OCI-LY7 (cell line): ENCODE measurements at regions of chr16 and their contacts with region 1.

Region 1: GRCh38 chr16:28553776-28554633 is at the start of gene SGF29:
- DNase-seq: peak; percentile 95
- H3K4me3 ChIP-seq: peak within 1 kb of the TSS; percentile 72
- H3K27ac ChIP-seq: peak within 1 kb of the TSS; percentile 81
- H3K4me1 ChIP-seq: peaks cover 22% of the 10 kb centered on the region
- CTCF ChIP-seq: peak; percentile 63
- total RNA-seq, gene SGF29: 21.8 and 32.0 TPM in 2 replicates

Region 2: DNA sequence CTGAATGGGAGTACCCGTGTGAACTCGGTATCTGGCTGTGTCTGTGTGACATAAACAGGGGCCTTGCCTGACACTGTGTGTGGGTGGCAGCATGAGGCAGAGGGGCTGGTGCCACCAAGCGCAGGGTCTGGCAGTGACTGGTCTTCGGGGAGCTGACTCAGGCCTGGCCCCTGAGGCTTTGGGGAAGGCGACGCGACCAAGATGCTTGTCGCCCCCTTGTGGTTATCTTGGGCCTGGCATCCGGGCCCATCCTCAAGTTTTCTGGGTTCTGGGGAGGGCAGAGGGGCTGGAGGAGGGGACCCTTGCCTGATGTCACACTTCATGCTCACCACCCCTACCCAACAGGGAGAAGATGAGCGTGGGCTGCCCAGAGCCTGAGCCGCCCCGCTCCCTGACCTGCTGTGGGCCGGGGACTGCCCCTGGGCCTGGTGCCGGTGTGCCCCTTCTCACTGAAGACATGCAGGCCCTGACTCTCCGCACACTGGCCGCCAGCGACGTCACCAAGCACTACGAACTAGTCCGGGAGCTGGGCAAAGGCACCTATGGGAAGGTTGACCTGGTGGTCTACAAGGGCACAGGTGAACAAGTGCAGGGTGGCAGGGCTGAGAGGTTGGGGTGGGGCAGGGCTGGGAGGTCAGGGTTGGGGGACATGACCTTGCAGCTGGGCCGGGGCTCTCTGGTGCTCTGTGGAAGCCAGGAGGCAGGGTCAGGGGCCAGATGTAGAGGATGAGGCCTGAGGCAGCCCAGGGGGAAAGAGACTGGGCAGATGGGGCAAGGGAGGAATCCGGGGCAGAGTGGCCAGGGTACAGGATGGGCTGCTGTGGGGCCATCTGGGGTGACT is 236.7 kb before region 1 on chr16:
- CTCF ChIA-PET with region 1: no interaction called
- POLR2A ChIA-PET with region 1: interaction called, 3 read pairs
- intact Hi-C with region 1: loop called (anchors 5 kb)
- DNase-seq: peak; percentile 73
- H3K4me3 ChIP-seq: no peak overlapping the region
- H3K27ac ChIP-seq: no peak overlapping the region
- H3K4me1 ChIP-seq: no peaks in the 10 kb centered on the region
- CTCF ChIP-seq: peak; percentile 92

Region 3: DNA sequence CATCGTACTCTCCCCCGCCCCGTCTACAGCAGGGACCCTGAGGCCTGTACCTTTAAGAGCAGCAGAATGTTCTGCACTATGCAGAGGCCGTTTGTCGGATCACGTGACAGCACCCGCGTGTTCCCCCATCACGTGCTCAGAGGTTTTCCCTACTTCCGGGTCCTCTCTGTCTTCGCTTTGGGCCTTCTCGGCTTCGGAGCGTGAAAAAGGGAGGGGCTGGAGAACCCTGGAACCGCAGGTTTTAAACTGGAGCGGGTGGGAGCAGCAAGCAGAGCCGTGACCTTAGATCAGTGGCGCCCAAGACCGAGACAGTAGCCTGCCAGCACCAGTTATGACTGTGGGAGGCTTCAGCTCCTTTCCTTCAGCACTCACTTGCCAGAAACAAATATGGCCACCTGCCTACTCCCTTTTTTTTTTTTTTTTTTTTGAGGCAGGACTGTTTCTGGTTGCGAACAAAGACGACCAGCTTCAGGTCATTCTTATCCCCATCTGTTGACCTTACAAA is 62.0 kb before region 1 on chr16 and contains the start of gene CLN3:
- CTCF ChIA-PET with region 1: interaction called, 3 read pairs
- POLR2A ChIA-PET with region 1: interaction called, 8 read pairs
- intact Hi-C with region 1: loop called (anchors 5 kb)
- DNase-seq: peak; percentile 97
- H3K4me3 ChIP-seq: peak within 1 kb of the TSS; percentile 88
- H3K27ac ChIP-seq: peak within 1 kb of the TSS; percentile 74
- H3K4me1 ChIP-seq: peaks cover 35% of the 10 kb centered on the region
- CTCF ChIP-seq: no peak
- total RNA-seq, gene CLN3: 29.7 and 45.5 TPM in 2 replicates

Region 4: GRCh38 chr16:28531777-28532744 is 21.9 kb before region 1 on chr16:
- CTCF ChIA-PET with region 1: no interaction called
- POLR2A ChIA-PET with region 1: no interaction called
- intact Hi-C with region 1: no loop called
- DNase-seq: no peak
- H3K4me3 ChIP-seq: no peak overlapping the region
- H3K27ac ChIP-seq: no peak overlapping the region
- H3K4me1 ChIP-seq: no peaks in the 10 kb centered on the region
- CTCF ChIP-seq: no peak

Region 5: DNA sequence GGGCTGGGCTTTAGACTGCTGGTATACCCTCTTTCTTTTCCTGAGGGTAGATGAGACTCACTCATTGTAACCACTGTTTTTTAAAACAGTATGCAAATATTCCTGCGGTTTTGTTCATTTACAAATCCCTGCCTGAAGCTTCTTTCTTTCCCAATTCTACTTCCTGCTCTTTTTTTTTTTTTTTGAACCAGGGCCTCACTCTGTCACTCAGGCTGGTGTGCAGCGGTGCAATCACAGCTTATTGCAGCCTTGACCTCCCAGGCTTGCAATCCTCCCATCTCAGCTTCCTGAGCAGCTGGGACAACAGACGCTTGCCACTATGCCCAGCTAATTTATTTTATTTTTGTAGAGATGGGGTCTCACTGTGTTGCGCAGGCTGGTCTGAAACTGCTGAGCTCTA is 63.9 kb after region 1 on chr16:
- CTCF ChIA-PET with region 1: no interaction called
- POLR2A ChIA-PET with region 1: no interaction called
- intact Hi-C with region 1: loop called (anchors 5 kb)
- DNase-seq: peak; percentile 79
- H3K4me3 ChIP-seq: peak overlapping the region; percentile 37
- H3K27ac ChIP-seq: peak overlapping the region; percentile 72
- H3K4me1 ChIP-seq: peaks cover 62% of the 10 kb centered on the region
- CTCF ChIP-seq: no peak